ENCODE measurements at regions of chr3 and their contacts with region 1.

Region 1: GRCh38 chr3:99638167-99638948 is at the start of gene COL8A1:
- DNase-seq: peak in 1 of 2 experiments; percentile 75
- H3K4me3 ChIP-seq: peak within 1 kb of the TSS; percentile 47 to 76 (median 74)
- H3K27ac ChIP-seq: no peak within 1 kb of the TSS
- H3K4me1 ChIP-seq: peaks cover 2 to 13% (median 10%) of the 10 kb centered on the region in 4 experiments; a peak in 4 of 7 replicates
- H3K27me3 ChIP-seq: peaks cover 0 to 28% (median 20%) of the 10 kb centered on the region in 4 experiments; a peak in 6 of 7 replicates
- CTCF ChIP-seq: no peak
- EP300 ChIP-seq: no peak
- POLR2A ChIP-seq: no peak
- RAD21 ChIP-seq: no peak
- total RNA-seq, gene COL8A1: 0.99 and 1.2 TPM in 2 replicates

Region 2: GRCh38 chr3:99484871-99485270 is 153.5 kb before region 1 on chr3:
- CTCF ChIA-PET with region 1: no interaction called
- POLR2A ChIA-PET with region 1: no interaction called
- DNase-seq: no peak
- H3K4me3 ChIP-seq: no peak overlapping the region
- H3K27ac ChIP-seq: no peak overlapping the region
- H3K4me1 ChIP-seq: peaks cover 0 to 3% (median 0%) of the 10 kb centered on the region in 4 experiments; a peak in 1 of 7 replicates
- H3K27me3 ChIP-seq: no peaks in the 10 kb centered on the region
- CTCF ChIP-seq: no peak
- EP300 ChIP-seq: no peak
- POLR2A ChIP-seq: no peak
- RAD21 ChIP-seq: no peak

Region 3: DNA sequence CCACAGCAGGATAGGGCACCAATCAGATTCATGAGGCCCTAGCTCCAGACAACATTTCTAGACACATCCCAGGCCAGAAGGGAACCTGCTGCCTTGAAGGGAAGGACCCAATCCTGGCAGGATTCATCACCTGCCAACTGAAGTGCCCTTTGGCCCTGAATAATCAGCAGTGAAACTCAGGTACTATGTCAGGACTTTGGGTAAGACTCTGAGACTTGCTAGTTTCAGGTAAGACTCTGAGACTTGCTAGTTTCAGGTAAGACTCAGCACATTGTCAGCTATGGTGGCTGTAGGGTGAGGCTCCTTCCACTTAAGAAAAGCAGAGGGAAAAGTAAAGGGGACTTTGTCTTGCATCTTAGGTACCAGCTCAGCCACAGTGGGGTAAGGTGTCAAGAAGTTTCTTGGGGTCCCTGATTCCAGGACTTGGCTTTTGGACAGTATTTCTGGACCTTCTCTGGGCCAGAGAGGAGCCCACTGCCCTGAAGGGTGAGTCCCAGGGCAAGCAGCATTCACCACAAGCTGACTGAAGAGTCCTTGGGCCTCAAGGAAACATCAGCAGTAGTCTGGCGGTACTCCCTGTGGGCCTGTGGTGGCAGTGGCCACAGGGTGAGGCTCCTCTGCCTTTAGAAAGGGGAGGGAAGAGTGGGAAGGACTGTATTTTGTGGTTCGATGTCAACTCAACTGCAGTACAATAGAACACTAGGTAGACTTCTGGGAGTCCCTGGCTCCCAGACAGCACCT is 13.7 kb before region 1 on chr3:
- CTCF ChIA-PET with region 1: interaction called, 10 read pairs
- POLR2A ChIA-PET with region 1: no interaction called
- DNase-seq: no peak
- H3K4me3 ChIP-seq: no peak overlapping the region
- H3K27ac ChIP-seq: no peak overlapping the region
- H3K4me1 ChIP-seq: no peaks in the 10 kb centered on the region
- H3K27me3 ChIP-seq: no peaks in the 10 kb centered on the region
- CTCF ChIP-seq: no peak
- EP300 ChIP-seq: no peak
- POLR2A ChIP-seq: no peak
- RAD21 ChIP-seq: no peak

Region 4: GRCh38 chr3:99651561-99651960 is 13.2 kb after region 1 on chr3:
- CTCF ChIA-PET with region 1: interaction called, 49 read pairs
- POLR2A ChIA-PET with region 1: interaction called, 5 read pairs
- DNase-seq: no peak
- H3K4me3 ChIP-seq: no peak overlapping the region
- H3K27ac ChIP-seq: no peak overlapping the region
- H3K4me1 ChIP-seq: no peaks in the 10 kb centered on the region
- H3K27me3 ChIP-seq: no peaks in the 10 kb centered on the region
- CTCF ChIP-seq: no peak
- EP300 ChIP-seq: no peak
- POLR2A ChIP-seq: no peak
- RAD21 ChIP-seq: no peak

Region 5: GRCh38 chr3:99686955-99687612 is 48.7 kb after region 1 on chr3:
- CTCF ChIA-PET with region 1: interaction called, 38 read pairs
- POLR2A ChIA-PET with region 1: no interaction called
- DNase-seq: peak in 1 of 2 experiments; percentile 84
- H3K4me3 ChIP-seq: no peak overlapping the region
- H3K27ac ChIP-seq: no peak overlapping the region
- H3K4me1 ChIP-seq: no peaks in the 10 kb centered on the region
- H3K27me3 ChIP-seq: peaks cover 0 to 1% (median 0%) of the 10 kb centered on the region in 4 experiments; a peak in 1 of 7 replicates
- CTCF ChIP-seq: peak; percentile 58 to 75 (median 74)
- EP300 ChIP-seq: no peak
- POLR2A ChIP-seq: no peak
- RAD21 ChIP-seq: peak; percentile 81 to 86